PC-3 (cell line): ENCODE measurements at regions of chr13 and their contacts with region 1.

Region 1: GRCh38 chr13:26253787-26254582 is at the start of gene CDK8:
- DNase-seq: peak; percentile 80
- ATAC-seq: peak; percentile 91
- H3K4me3 ChIP-seq: peak within 1 kb of the TSS; percentile 93
- H3K27ac ChIP-seq: peak within 1 kb of the TSS; percentile 62
- H3K4me1 ChIP-seq: peaks cover 15% of the 10 kb centered on the region
- H3K27me3 ChIP-seq: peaks cover 4% of the 10 kb centered on the region; the same call in 1 of the 2 replicates
- CTCF ChIP-seq: no peak
- total RNA-seq, gene CDK8: 14.5 and 18.7 TPM in 2 replicates

Region 2: GRCh38 chr13:26221721-26222519 is 32.1 kb before region 1 on chr13 and contains the start of gene RNF6:
- CTCF ChIA-PET with region 1: interaction called, 7 read pairs
- POLR2A ChIA-PET with region 1: interaction called, 5 read pairs
- intact Hi-C with region 1: loop called (anchors 1 kb)
- DNase-seq: peak; percentile 94
- ATAC-seq: peak; percentile 97
- H3K4me3 ChIP-seq: peak within 1 kb of the TSS; percentile 96
- H3K27ac ChIP-seq: peak within 1 kb of the TSS; percentile 92
- H3K4me1 ChIP-seq: peaks cover 23% of the 10 kb centered on the region
- H3K27me3 ChIP-seq: no peaks in the 10 kb centered on the region
- CTCF ChIP-seq: no peak
- total RNA-seq, gene RNF6: 23.8 and 34.0 TPM in 2 replicates

Region 3: GRCh38 chr13:26300140-26300539 is 46.2 kb after region 1 on chr13:
- CTCF ChIA-PET with region 1: no interaction called
- POLR2A ChIA-PET with region 1: no interaction called
- intact Hi-C with region 1: loop called (anchors 10 kb)
- DNase-seq: peak; percentile 60
- ATAC-seq: peak; percentile 35
- H3K4me3 ChIP-seq: no peak overlapping the region
- H3K27ac ChIP-seq: peak overlapping the region; percentile 19; the same call in 1 of the 2 replicates
- H3K4me1 ChIP-seq: peaks cover 26% of the 10 kb centered on the region
- H3K27me3 ChIP-seq: no peaks in the 10 kb centered on the region
- CTCF ChIP-seq: no peak

Region 4: DNA sequence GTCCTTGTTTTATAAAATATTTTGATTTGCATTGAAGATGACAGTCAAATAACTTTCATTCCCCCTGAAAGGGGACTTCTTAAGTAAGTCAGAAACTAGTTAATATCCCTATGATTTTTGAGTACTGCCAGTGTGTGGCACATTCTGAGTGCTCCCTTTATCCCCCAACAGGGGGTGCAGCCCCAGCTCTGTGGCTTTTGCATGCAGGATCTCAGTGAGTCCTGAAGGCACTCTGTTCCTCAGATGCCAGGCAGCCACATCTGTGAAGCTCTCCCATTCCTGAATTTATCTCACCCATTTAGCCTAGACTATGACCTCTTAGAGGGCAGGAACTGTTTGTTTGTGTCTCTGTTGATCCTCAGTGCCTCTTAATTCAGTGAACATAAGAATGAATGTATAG is 123.1 kb after region 1 on chr13:
- CTCF ChIA-PET with region 1: no interaction called
- POLR2A ChIA-PET with region 1: no interaction called
- intact Hi-C with region 1: loop called (anchors 5 kb)
- DNase-seq: peak; percentile 44
- ATAC-seq: peak; percentile 45; the same call in 1 of the 2 replicates
- H3K4me3 ChIP-seq: no peak overlapping the region
- H3K27ac ChIP-seq: no peak overlapping the region
- H3K4me1 ChIP-seq: no peaks in the 10 kb centered on the region
- H3K27me3 ChIP-seq: no peaks in the 10 kb centered on the region
- CTCF ChIP-seq: peak; percentile 58

Region 5: GRCh38 chr13:26498656-26499591 is 244.9 kb after region 1 on chr13:
- CTCF ChIA-PET with region 1: interaction called, 4 read pairs
- POLR2A ChIA-PET with region 1: no interaction called
- intact Hi-C with region 1: loop called (anchors 2 kb)
- DNase-seq: peak; percentile 28
- ATAC-seq: peak; percentile 53
- H3K4me3 ChIP-seq: no peak overlapping the region
- H3K27ac ChIP-seq: no peak overlapping the region
- H3K4me1 ChIP-seq: no peaks in the 10 kb centered on the region
- H3K27me3 ChIP-seq: no peaks in the 10 kb centered on the region; the same call in 1 of the 2 replicates
- CTCF ChIP-seq: peak; percentile 29; the same call in 1 of the 2 replicates